ENCODE measurements at regions of chr11 and their contacts with region 1.

Region 1: DNA sequence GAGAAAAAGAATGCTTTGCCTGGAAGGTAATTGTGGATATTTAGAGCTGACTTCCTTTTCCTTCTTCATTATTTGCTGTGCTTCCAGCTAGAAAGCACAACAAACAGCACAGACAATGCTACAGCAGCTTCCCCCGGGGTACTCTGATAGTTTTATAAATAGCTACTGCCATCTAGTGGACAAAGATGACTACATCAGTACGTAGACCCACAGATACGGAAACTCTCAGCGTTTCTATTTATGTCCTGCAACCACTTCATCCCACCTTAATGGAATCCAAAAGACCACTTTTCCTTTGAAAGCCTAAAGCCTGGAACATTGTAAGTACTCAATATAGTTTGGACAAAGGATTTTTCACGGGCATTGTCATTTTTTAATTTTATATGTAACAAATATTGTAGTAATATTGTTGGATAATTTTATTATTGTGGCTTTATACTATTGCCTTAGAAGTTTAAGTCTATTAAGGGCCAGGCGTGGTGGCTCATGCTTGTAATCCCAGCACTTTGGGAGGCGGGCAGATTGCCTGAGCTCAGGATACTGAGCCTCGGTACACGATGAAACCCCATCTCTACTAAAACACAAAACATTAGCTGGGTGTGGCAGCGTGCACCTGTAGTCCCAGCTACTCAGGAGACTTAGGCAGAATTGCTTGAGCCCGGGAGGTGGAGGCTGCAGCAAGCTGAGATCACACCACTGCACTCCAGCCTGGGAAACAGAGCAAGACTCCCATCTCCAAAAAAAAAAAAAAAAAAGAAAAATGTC is 7.5 kb downstream of the HSPA8 start:
- DNase-seq: peak in 4 of 9 experiments; percentile 28 to 84 (median 56)
- ATAC-seq: peak; percentile 85
- H3K4me3 ChIP-seq: no peak overlapping the region
- H3K4me3 Mint-ChIP-seq: peak overlapping the region; percentile 67
- H3K27ac ChIP-seq: peak overlapping the region in 1 of 2 experiments; percentile 51
- H3K27ac Mint-ChIP-seq: peak overlapping the region; percentile 97
- H3K4me1 ChIP-seq: peaks cover 55% of the 10 kb centered on the region
- H3K4me1 Mint-ChIP-seq: peaks cover 57% of the 10 kb centered on the region
- H3K27me3 ChIP-seq: no peaks in the 10 kb centered on the region
- H3K27me3 Mint-ChIP-seq: no peaks in the 10 kb centered on the region
- CTCF ChIP-seq: peak; percentile 72

Region 2: GRCh38 chr11:122863704-122864326 is 190.7 kb before region 1 on chr11:
- CTCF ChIA-PET with region 1: interaction called, 27 read pairs
- POLR2A ChIA-PET with region 1: no interaction called
- intact Hi-C with region 1: loop called (anchors 2 kb)
- DNase-seq: peak in 6 of 9 experiments; percentile 10 to 56 (median 38)
- ATAC-seq: no peak
- H3K4me3 ChIP-seq: no peak overlapping the region
- H3K4me3 Mint-ChIP-seq: no peak overlapping the region
- H3K27ac ChIP-seq: no peak overlapping the region
- H3K27ac Mint-ChIP-seq: no peak overlapping the region
- H3K4me1 ChIP-seq: no peaks in the 10 kb centered on the region
- H3K4me1 Mint-ChIP-seq: peaks cover 12% of the 10 kb centered on the region
- H3K27me3 ChIP-seq: no peaks in the 10 kb centered on the region
- H3K27me3 Mint-ChIP-seq: no peaks in the 10 kb centered on the region
- CTCF ChIP-seq: peak; percentile 83

Region 3: DNA sequence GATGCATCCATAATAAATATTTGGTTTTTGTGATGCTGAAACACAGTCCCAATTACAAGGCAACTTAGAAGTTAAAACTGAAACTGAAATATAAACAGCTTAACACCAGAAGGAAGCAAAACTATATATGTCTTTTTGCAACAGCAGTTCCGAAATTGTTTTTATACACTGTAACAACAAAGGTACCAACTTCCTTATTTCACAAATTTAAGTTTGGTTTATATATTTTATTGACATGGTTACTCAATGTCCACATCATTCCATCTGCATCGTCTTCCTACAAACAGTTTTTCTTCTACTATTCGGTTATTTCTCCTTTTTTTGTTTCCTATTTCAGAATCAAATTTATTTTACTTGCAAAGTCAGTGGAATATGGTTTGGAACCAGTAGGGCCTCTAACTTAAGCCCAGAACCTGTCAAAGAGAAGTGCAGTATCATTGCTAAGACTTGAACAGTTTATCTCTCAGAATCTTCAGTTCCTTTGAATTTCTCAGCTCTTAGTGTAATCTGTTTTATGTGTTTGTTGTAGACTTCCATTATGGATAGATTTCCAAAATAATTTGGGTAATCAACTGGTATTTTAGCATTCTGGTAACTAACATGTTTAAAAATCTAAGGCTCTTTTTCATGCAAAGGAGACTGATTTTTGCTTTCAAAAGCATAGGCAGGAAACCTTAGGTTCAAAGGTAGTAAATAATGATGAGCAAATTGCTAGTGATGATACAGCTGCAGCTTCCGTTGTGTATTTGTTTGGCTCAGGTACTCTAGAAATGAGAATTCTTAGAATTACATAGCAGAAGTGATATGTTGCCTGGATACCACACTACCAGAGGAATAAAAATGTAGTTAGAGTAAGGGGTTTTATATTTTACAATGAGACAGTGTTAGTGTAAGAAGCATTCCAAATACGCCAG is 15.7 kb after region 1 on chr11:
- CTCF ChIA-PET with region 1: interaction called, 41 read pairs
- POLR2A ChIA-PET with region 1: interaction called, 85 read pairs
- intact Hi-C with region 1: loop called in 1 of 2 experiments (anchors 2 kb)
- DNase-seq: peak in 2 of 9 experiments; percentile 46 to 65
- ATAC-seq: peak; percentile 71
- H3K4me3 ChIP-seq: peak overlapping the region; percentile 40 to 50
- H3K4me3 Mint-ChIP-seq: peak overlapping the region; percentile 84
- H3K27ac ChIP-seq: peak overlapping the region; percentile 80 to 85
- H3K27ac Mint-ChIP-seq: peak overlapping the region; percentile 92
- H3K4me1 ChIP-seq: peaks cover 52% of the 10 kb centered on the region
- H3K4me1 Mint-ChIP-seq: peaks cover 66% of the 10 kb centered on the region
- H3K27me3 ChIP-seq: no peaks in the 10 kb centered on the region
- H3K27me3 Mint-ChIP-seq: no peaks in the 10 kb centered on the region
- CTCF ChIP-seq: no peak

Region 4: GRCh38 chr11:123103326-123103980 is 49.0 kb after region 1 on chr11:
- CTCF ChIA-PET with region 1: interaction called, 123 read pairs
- POLR2A ChIA-PET with region 1: interaction called, 5 read pairs
- intact Hi-C with region 1: loop called in 1 of 2 experiments (anchors 5 kb)
- DNase-seq: peak in 7 of 9 experiments; percentile 16 to 68 (median 38)
- ATAC-seq: peak; percentile 66
- H3K4me3 ChIP-seq: no peak overlapping the region
- H3K4me3 Mint-ChIP-seq: no peak overlapping the region
- H3K27ac ChIP-seq: no peak overlapping the region
- H3K27ac Mint-ChIP-seq: no peak overlapping the region
- H3K4me1 ChIP-seq: peaks cover 14% of the 10 kb centered on the region
- H3K4me1 Mint-ChIP-seq: peaks cover 27% of the 10 kb centered on the region
- H3K27me3 ChIP-seq: no peaks in the 10 kb centered on the region
- H3K27me3 Mint-ChIP-seq: no peaks in the 10 kb centered on the region
- CTCF ChIP-seq: peak; percentile 58

Region 5: GRCh38 chr11:123246749-123247495 is 192.4 kb after region 1 on chr11:
- CTCF ChIA-PET with region 1: interaction called, 21 read pairs
- POLR2A ChIA-PET with region 1: interaction called, 5 read pairs
- intact Hi-C with region 1: no loop called
- DNase-seq: peak; percentile 68 to 88 (median 80)
- ATAC-seq: peak; percentile 86
- H3K4me3 ChIP-seq: no peak overlapping the region
- H3K4me3 Mint-ChIP-seq: peak overlapping the region; percentile 42
- H3K27ac ChIP-seq: no peak overlapping the region
- H3K27ac Mint-ChIP-seq: no peak overlapping the region
- H3K4me1 ChIP-seq: no peaks in the 10 kb centered on the region
- H3K4me1 Mint-ChIP-seq: peaks cover 6% of the 10 kb centered on the region
- H3K27me3 ChIP-seq: no peaks in the 10 kb centered on the region
- H3K27me3 Mint-ChIP-seq: peaks cover 12% of the 10 kb centered on the region
- CTCF ChIP-seq: peak; percentile 94